ENCODE measurements at regions of chr4 and their contacts with region 1.

Region 1: DNA sequence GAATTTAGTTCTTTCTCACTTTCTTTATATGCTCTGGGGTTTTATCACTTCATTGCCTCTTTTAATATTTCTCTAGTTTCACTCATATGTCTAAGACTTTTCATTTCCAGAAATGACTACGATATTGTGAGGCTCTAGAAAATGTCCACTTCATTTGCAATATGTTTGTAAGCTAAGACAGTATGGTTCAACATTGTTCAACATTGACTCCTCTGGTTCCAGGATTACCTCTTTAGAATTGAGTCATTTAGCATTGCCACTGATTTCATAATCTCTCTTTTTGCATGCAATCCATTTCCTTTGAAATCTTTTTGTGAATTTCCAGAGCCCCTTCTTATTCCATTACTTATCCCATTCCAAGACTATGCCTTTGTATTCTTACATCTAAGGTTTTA is 32.3 kb downstream of the BBS12 start:
- DNase-seq: peak; percentile 44
- H3K4me3 ChIP-seq: no peak overlapping the region
- H3K27ac ChIP-seq: peak overlapping the region; percentile 58
- H3K4me1 ChIP-seq: peaks cover 16% of the 10 kb centered on the region
- H3K27me3 ChIP-seq: no peaks in the 10 kb centered on the region
- CTCF ChIP-seq: no peak
- POLR2A ChIP-seq: no peak

Region 2: GRCh38 chr4:122783301-122784215 is 18.7 kb after region 1 on chr4:
- CTCF ChIA-PET with region 1: interaction called, 13 read pairs
- POLR2A ChIA-PET with region 1: no interaction called
- dilution Hi-C with region 1: no loop called
- intact Hi-C with region 1: loop called (anchors 2 kb)
- DNase-seq: peak; percentile 86
- H3K4me3 ChIP-seq: no peak overlapping the region
- H3K27ac ChIP-seq: peak overlapping the region; percentile 64
- H3K4me1 ChIP-seq: peaks cover 20% of the 10 kb centered on the region
- H3K27me3 ChIP-seq: no peaks in the 10 kb centered on the region
- CTCF ChIP-seq: no peak
- POLR2A ChIP-seq: peak; percentile 13

Region 3: GRCh38 chr4:122865425-122865824 is 100.6 kb after region 1 on chr4:
- CTCF ChIA-PET with region 1: no interaction called
- POLR2A ChIA-PET with region 1: no interaction called
- dilution Hi-C with region 1: no loop called
- intact Hi-C with region 1: no loop called
- DNase-seq: no peak
- H3K4me3 ChIP-seq: no peak overlapping the region
- H3K27ac ChIP-seq: no peak overlapping the region
- H3K4me1 ChIP-seq: no peaks in the 10 kb centered on the region
- H3K27me3 ChIP-seq: no peaks in the 10 kb centered on the region
- CTCF ChIP-seq: no peak
- POLR2A ChIP-seq: no peak

Region 4: GRCh38 chr4:122898370-122899150 is 133.7 kb after region 1 on chr4:
- CTCF ChIA-PET with region 1: interaction called, 3 read pairs
- POLR2A ChIA-PET with region 1: no interaction called
- dilution Hi-C with region 1: loop called (anchors 25 kb)
- intact Hi-C with region 1: loop called (anchors 2 kb)
- DNase-seq: peak; percentile 90
- H3K4me3 ChIP-seq: no peak overlapping the region
- H3K27ac ChIP-seq: peak overlapping the region; percentile 76
- H3K4me1 ChIP-seq: peaks cover 33% of the 10 kb centered on the region
- H3K27me3 ChIP-seq: no peaks in the 10 kb centered on the region
- CTCF ChIP-seq: no peak
- POLR2A ChIP-seq: peak; percentile 24